ENCODE measurements at regions of chr22 and their contacts with region 1.

Region 1: DNA sequence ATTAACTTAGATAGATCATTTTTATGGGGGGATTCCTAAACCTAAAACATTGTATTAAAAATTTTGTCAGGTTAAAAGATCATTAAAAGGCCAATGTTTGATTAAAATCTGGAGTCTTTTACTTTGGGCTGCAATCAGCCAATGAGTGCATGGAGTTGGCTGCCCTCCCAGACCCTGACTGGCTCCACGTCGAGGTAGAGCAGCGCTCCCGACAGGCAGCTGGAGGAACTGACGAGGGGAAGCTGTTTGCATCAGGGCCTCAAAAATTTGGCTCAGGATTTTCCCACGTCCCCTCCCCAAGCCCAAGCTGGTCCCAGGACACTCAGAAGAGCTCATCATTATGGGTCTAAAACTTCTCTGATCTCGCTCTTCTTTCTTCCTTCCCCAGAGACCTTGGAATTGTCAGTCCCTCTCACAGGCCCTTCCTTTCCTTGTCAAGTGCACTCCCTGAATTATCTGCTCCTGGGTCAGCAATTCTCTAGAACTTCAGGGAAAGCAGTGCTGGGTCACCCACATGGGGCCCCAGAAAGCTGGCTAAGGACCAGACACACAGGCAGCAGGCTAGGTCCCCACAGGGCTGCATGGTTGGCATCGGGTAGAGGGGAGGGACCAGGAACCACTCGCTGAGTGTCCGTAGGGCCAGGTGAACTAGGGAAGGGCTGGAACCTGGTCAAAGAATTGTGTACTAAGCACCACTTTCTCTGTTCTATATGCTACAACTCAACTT is 119.6 kb upstream of the IGLL5 start:
- DNase-seq: no peak
- H3K4me3 Mint-ChIP-seq: no peak overlapping the region
- H3K27ac Mint-ChIP-seq: no peak overlapping the region
- H3K4me1 Mint-ChIP-seq: no peaks in the 10 kb centered on the region
- H3K27me3 Mint-ChIP-seq: peaks cover 14% of the 10 kb centered on the region

Region 2: DNA sequence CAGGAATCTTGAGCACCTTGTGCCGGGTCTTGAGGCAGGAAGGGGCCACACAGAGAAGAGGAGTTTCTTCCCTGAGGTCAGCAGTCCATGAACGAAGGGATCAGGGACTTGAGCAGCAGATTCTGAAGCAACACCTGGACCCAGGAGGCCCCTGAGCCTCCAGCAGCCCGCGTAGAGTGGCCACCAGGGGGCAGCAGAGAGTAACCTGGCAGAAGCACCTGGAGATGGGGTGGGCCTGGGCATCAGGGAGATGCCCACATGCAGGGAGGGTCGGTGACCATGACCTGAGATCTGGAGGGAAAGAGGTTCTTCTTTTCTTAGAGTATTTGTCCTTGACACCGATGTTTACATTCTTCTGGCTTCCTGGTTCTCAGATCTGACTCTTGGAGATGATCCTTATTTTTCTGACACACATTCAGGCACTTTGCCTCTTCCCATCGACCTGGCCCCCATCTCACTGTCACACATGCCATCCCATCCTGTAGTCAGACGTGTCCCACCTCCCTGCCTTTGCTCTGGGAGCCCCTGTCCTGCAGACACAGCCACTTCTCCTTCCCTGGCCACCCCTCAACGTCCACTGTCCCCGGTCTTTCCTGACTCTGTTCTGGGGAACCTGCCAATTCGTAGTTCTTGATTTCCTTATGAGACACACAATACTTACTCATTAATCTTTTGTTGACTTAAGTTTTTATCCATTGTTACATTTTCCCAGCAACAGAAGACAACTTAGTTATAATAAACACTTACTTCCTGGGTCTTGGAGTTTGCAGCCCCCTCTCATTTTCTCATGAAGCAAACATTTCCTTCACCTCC is 57.1 kb before region 1 on chr22:
- intact Hi-C with region 1: loop called (anchors 5 kb)
- DNase-seq: peak; percentile 56
- H3K4me3 Mint-ChIP-seq: no peak overlapping the region
- H3K27ac Mint-ChIP-seq: no peak overlapping the region
- H3K4me1 Mint-ChIP-seq: no peaks in the 10 kb centered on the region
- H3K27me3 Mint-ChIP-seq: peaks cover 11% of the 10 kb centered on the region

Region 3: GRCh38 chr22:22738810-22739585 is 29.0 kb before region 1 on chr22:
- intact Hi-C with region 1: no loop called
- DNase-seq: no peak
- H3K4me3 Mint-ChIP-seq: no peak overlapping the region
- H3K27ac Mint-ChIP-seq: no peak overlapping the region
- H3K4me1 Mint-ChIP-seq: no peaks in the 10 kb centered on the region
- H3K27me3 Mint-ChIP-seq: peaks cover 32% of the 10 kb centered on the region

Region 4: GRCh38 chr22:22753526-22754267 is 14.3 kb before region 1 on chr22:
- intact Hi-C with region 1: loop called (anchors 2 kb)
- DNase-seq: peak; percentile 61
- H3K4me3 Mint-ChIP-seq: no peak overlapping the region
- H3K27ac Mint-ChIP-seq: no peak overlapping the region
- H3K4me1 Mint-ChIP-seq: peaks cover 5% of the 10 kb centered on the region
- H3K27me3 Mint-ChIP-seq: no peaks in the 10 kb centered on the region

Region 5: GRCh38 chr22:23204541-23205157 is 436.6 kb after region 1 on chr22:
- intact Hi-C with region 1: no loop called
- DNase-seq: no peak
- H3K4me3 Mint-ChIP-seq: no peak overlapping the region
- H3K27ac Mint-ChIP-seq: peak overlapping the region; percentile 40
- H3K4me1 Mint-ChIP-seq: peaks cover 13% of the 10 kb centered on the region
- H3K27me3 Mint-ChIP-seq: no peaks in the 10 kb centered on the region

Measured in activated T-helper 1 cell treated with anti-CD3 and anti-CD28 coated beads, Interleukin-12 subunit alpha, Interleukin-12 subunit beta, Interleukin-2, Interleukin-4 antibody, amounts not matched to agents 30 ng/mL and 10 ng/mL and 1 ng/mL, durations not matched to agents 14 hours and 24 hours and 36 hours (primary cell).